ENCODE measurements at regions of chr19 and their contacts with region 1.

Region 1: DNA sequence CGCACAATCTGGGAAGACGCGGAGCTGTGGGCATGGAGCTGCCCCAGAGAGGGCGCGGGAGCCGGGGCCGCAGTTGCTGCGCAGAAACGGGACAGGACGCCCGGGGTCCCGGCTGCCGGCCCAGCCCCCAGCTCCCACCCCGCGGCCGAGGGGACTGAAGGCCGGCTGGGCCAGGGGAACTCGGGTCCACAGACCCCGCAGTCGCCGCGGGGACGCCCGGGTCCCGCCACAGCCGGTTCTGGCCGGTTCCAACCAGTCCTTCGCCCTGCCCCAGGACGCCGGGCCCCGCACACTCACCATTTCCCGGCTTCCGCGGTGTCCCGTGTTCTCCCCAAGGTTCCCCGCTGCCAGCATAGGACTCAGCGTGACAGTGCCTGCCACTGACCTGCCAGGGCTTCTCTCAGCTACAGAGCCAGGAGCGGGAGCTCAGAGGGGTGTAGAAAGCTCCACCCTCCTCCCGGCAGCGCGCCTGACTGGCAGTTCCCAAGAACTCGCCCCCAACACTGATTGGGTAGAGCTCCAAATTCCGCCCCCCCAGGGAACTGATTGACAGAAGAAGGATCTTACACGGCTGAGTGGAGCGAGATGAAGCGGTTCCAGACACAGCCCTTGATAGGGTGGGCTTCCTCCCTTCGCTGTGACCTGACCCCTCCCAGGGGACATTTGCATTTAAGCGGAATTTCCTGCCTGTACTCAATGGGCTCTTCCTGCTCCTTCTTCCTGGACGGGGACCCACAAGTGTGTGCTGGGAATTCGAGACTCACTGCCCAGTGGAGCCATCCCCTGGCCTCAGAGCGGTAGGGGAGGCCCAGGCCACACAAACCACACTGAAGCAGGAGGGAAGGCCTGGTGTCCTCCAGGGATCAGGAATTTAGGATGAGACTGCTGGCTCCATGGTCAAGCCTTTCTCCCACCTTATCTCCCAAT is at the start of gene ZNF442:
- DNase-seq: peak; percentile 58
- H3K4me3 Mint-ChIP-seq: peak within 1 kb of the TSS; percentile 91
- H3K27ac Mint-ChIP-seq: peak within 1 kb of the TSS; percentile 67
- H3K4me1 Mint-ChIP-seq: peaks cover 10% of the 10 kb centered on the region
- H3K27me3 Mint-ChIP-seq: peaks cover 2% of the 10 kb centered on the region
- total RNA-seq, gene ZNF442: 0.39 and 0.47 TPM in 2 replicates

Region 2: DNA sequence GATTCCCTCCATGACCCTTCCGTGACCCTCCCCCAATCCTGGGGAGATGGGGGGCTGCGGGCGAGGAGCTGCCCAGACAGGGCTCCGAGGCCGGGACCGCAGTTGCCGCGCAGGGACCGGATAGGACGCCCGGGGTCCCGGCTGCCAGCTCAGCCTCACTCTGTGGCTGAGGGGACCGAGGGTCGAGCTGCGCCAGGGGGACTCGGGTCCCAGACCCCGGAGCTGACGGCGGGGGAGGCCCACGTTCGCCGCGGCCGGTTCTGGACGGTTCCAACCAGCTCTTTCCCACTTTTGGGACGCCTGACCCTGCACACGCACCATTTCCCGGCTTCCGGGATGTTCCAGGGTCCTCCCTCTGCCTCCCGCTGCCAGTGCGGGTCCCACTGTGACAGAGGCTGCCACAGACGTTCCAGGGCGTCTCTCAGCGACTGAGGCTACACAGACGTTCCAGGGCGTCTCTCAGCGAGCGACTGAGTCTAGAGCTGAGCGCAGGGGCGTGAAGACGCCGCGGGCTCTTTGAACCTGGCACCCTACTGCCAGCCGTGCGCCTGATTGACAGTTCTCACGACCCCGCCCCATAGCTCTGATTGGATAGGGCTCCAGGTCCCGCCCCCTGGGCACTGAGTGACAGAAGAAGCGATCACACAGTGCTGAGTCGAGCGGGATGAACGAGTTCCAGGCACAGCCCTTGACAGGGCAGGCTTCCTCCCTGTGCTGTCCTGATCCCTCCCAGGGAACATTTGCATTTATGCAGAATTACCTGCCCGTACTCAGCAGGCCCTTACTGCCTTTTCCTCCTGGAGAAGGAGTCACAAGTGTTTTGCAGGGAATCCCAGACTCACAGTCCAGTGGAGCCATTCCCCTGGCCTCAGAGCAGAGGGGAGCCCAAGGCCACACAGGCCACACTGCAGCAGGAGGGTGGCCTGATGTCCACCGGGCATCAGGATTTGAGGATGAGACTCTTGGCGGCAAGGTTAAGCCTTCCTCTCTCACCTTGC is 32.0 kb before region 1 on chr19 and contains the start of gene ZNF563:
- intact Hi-C with region 1: loop called (anchors 1 kb)
- DNase-seq: peak; percentile 96
- H3K4me3 Mint-ChIP-seq: peak within 1 kb of the TSS; percentile 96
- H3K27ac Mint-ChIP-seq: peak within 1 kb of the TSS; percentile 96
- H3K4me1 Mint-ChIP-seq: peaks cover 38% of the 10 kb centered on the region
- H3K27me3 Mint-ChIP-seq: no peaks in the 10 kb centered on the region
- total RNA-seq, gene ZNF563: 1.4 and 2.5 TPM in 2 replicates

Region 3: DNA sequence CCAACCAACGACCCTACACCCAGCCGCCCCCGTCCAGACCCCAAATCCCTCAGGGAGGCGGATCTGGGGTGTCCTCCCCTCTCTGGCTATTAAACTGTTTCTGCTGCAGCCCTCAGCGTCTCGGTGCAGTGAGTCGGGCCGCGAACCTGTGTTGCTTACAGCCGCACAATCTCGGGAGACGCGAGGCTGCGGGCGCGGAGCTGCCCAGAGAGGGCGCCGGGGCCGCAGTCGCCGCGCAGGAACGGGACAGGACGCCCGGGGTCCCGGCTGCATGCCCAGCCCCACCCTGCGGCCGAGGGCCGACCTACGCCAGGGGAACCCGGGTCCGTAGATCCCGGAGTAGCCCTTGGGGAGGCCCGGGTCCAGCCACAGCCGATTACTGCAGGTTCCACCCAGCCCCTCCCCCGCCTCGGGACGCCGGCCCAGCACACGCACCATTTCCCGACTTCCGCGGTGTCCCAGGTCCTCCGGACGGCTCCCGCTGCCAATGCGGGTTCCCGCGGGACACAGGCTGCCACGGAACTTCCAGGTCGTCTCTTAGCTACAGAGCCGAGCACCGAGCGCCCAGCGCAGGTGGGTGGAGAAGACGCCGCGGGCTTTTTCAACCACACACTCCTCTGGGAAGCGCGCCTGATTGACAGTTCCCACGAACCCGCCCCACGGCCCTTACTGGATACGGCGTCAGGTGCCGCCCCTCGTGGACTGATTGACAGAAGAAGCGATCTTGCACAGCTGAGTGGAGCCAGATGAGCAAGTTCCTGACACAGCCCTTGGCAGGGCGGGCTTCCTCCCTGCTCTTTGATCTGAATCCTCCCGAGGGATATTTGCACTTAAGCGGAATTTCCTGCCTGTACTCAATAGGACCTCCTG is 35.4 kb after region 1 on chr19 and contains the start of gene ZNF799:
- intact Hi-C with region 1: loop called (anchors 1 kb)
- DNase-seq: peak; percentile 81
- H3K4me3 Mint-ChIP-seq: peak within 1 kb of the TSS; percentile 93
- H3K27ac Mint-ChIP-seq: peak within 1 kb of the TSS; percentile 68
- H3K4me1 Mint-ChIP-seq: peaks cover 24% of the 10 kb centered on the region
- H3K27me3 Mint-ChIP-seq: no peaks in the 10 kb centered on the region
- total RNA-seq, gene ZNF799: 3.1 TPM in 2 replicates

Region 4: GRCh38 chr19:12484371-12485051 is 119.0 kb after region 1 on chr19 and contains the start of gene ZNF709:
- intact Hi-C with region 1: loop called (anchors 1 kb)
- DNase-seq: peak; percentile 79
- H3K4me3 Mint-ChIP-seq: peak within 1 kb of the TSS; percentile 91
- H3K27ac Mint-ChIP-seq: peak within 1 kb of the TSS; percentile 35
- H3K4me1 Mint-ChIP-seq: peaks cover 27% of the 10 kb centered on the region
- H3K27me3 Mint-ChIP-seq: no peaks in the 10 kb centered on the region
- total RNA-seq, gene ZNF709: 0.26 TPM in 1 of 2 replicates, not detected in the other

Region 5: GRCh38 chr19:12821761-12822160 is 456.3 kb after region 1 on chr19:
- intact Hi-C with region 1: no loop called
- DNase-seq: no peak
- H3K4me3 Mint-ChIP-seq: no peak overlapping the region
- H3K27ac Mint-ChIP-seq: no peak overlapping the region
- H3K4me1 Mint-ChIP-seq: peaks cover 11% of the 10 kb centered on the region
- H3K27me3 Mint-ChIP-seq: peaks cover 11% of the 10 kb centered on the region

Measured in activated T-helper 1 cell treated with anti-CD3 and anti-CD28 coated beads, Interleukin-12 subunit alpha, Interleukin-12 subunit beta, Interleukin-2, Interleukin-4 antibody, amounts not matched to agents 30 ng/mL and 10 ng/mL and 1 ng/mL, durations not matched to agents 14 hours and 24 hours and 36 hours (primary cell).